Left ventricle myocardium superior (tissue), 1 donor: ENCODE measurements at regions of chr19 and their contacts with region 1.

Region 1: DNA sequence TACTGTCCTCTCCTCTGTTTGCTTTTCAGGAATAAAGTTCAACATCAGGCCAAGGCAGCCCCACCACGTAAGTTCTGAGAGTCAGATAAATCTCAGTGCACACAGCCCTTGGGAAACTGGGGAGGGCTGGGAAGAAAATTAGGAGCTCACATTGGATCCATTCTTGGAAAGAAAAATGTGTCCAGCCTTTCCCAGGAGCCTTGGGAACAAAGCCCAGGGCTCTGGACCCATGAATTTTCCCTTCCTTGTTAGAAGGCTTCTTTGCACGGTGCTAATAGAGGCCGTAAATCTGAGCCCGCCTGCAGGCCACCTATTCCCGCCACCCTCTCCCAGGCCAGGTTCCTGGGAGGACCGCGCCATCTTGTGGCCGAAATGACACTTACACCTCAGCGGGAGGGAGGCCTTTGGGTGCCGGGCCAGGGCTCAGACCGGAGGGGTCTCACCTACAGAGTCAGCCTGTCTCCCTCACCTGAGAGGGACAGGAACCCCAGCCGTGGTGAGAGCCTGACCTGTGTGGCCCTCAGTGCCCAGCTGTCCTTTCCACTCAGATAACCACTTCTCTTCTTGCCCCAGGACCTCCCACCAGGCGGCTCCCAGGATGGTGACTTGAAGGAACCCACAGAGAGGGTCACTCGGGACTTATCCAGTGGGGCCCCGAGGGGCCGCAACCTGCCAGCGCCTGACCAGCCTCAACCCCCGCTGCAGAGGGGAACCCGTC is 25.1 kb upstream of the KCTD15 start:
- DNase-seq: peak; percentile 83
- ATAC-seq: peak; percentile 83

Region 2: GRCh38 chr19:33416307-33417215 is 355.0 kb before region 1 on chr19:
- intact Hi-C with region 1: loop called (anchors 5 kb)
- DNase-seq: peak; percentile 75
- ATAC-seq: peak; percentile 74

Region 3: DNA sequence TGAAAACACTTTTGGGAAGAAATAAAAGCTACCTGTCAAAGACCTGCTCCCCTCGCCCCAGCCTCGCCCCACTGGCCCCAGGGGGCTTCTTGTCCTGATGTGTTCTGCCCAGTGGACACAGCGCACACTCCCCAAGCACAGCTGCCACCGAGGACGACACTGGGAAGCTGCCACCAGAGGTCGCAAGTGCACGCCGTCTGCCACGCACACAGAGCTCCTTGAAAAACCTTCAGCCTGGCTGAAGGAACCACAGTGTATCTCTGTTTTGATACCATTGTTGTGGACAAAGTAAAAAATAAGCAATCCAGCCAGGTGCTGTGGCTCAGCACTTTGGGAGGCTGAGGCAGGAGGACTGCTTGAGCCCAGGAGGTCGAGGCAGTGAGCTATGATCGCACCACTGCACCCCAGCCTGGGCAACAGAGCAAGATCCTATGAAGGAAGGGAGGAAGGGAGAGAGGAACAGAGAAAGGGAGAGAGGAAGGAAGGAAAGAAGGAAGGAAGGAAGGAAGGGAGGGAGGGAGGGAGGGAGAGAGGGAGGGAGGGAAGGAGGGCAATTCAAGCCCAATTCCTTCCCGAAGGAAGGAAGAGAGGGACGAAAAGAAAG is 340.8 kb before region 1 on chr19:
- intact Hi-C with region 1: loop called (anchors 5 kb)
- DNase-seq: peak; percentile 81
- ATAC-seq: peak; percentile 85

Region 4: GRCh38 chr19:33819880-33820781 is 48.6 kb after region 1 on chr19:
- intact Hi-C with region 1: no loop called
- DNase-seq: peak; percentile 89
- ATAC-seq: peak; percentile 92